ENCODE measurements at regions of chr20 and their contacts with region 1.

Region 1: GRCh38 chr20:49982346-49983122 is at the start of gene SNAI1:
- DNase-seq: peak; percentile 96 to 97
- H3K4me3 ChIP-seq: peak within 1 kb of the TSS; percentile 69
- H3K4me3 Mint-ChIP-seq: peak within 1 kb of the TSS; percentile 73
- H3K27ac Mint-ChIP-seq: peak within 1 kb of the TSS; percentile 73
- H3K4me1 ChIP-seq: peaks cover 43% of the 10 kb centered on the region
- H3K4me1 Mint-ChIP-seq: peaks cover 34% of the 10 kb centered on the region
- H3K27me3 ChIP-seq: no peaks in the 10 kb centered on the region
- H3K27me3 Mint-ChIP-seq: no peaks in the 10 kb centered on the region
- CTCF ChIP-seq: peak; percentile 71 to 98
- total RNA-seq, gene SNAI1: 8.9 and 10.9 TPM in 2 replicates

Region 2: DNA sequence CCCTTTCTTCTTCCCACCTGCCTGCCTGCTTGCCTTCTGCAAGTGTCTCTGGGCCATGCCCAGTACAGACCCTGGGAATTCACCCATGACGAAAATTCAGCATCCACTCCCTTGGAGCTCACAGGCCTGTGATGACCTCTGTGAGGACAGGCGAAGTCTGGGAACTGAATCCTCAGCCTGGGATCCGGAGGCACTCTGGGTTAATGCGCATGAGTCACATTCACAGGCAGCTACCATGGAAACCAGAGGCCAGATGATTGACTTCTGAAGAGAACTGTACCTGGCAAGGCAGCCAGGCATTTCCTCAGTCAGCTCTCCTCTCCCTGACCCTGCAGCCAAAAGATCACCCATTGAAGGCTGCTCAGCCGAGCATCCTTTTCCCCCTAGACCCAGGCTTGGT is 128.9 kb before region 1 on chr20:
- CTCF ChIA-PET with region 1: no interaction called
- POLR2A ChIA-PET with region 1: no interaction called
- intact Hi-C with region 1: no loop called
- DNase-seq: peak in 1 of 2 experiments; percentile 49
- H3K4me3 ChIP-seq: no peak overlapping the region
- H3K4me3 Mint-ChIP-seq: no peak overlapping the region
- H3K27ac Mint-ChIP-seq: no peak overlapping the region
- H3K4me1 ChIP-seq: no peaks in the 10 kb centered on the region
- H3K4me1 Mint-ChIP-seq: no peaks in the 10 kb centered on the region
- H3K27me3 ChIP-seq: no peaks in the 10 kb centered on the region
- H3K27me3 Mint-ChIP-seq: no peaks in the 10 kb centered on the region
- CTCF ChIP-seq: no peak

Region 3: DNA sequence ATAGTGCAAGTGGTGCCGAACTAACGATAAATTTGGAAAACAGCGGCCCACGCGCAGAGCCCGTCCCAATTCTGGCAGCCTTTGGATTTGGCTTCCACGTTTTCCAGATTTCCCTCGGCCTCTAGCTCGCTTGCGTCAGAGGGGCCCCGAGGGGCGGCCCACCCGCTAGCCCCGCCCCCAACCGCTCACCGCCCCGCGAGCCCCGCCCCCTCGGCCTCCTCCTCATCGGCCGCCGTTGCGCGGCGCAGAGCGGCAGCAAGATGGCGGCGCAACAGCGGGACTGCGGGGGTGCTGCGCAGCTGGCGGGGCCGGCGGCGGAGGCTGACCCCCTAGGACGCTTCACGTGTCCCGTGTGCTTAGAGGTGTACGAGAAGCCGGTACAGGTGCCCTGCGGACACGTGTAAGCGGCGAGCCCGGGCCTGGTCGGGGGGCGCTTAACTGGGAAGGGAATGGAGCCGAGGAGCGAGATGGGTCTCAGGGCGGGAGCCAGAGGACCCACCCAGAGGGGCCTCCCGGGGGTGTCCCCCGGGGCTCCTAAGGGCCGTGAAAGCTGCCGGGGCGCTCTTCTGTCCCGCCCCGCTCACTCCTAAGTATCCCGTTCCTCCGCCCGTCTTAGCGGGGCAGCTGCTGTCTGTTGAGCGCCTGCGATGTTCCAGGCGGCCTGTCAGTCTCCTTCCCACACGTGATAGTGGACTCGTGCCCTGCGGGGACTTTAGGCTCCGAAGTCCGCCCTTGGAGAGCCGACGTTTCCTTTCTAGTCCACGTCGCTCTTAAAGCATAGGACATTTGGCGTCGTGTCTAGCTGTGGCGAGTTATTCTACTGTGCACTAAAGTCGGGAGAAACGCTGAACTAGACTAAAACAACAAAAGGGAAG is 46.1 kb before region 1 on chr20 and contains the start of gene RNF114:
- CTCF ChIA-PET with region 1: interaction called, 13 read pairs
- POLR2A ChIA-PET with region 1: interaction called, 6 read pairs
- intact Hi-C with region 1: loop called (anchors 2 kb)
- DNase-seq: peak; percentile 94 to 98
- H3K4me3 ChIP-seq: peak within 1 kb of the TSS; percentile 87
- H3K4me3 Mint-ChIP-seq: peak within 1 kb of the TSS; percentile 93
- H3K27ac Mint-ChIP-seq: peak within 1 kb of the TSS; percentile 91
- H3K4me1 ChIP-seq: peaks cover 32% of the 10 kb centered on the region
- H3K4me1 Mint-ChIP-seq: peaks cover 38% of the 10 kb centered on the region
- H3K27me3 ChIP-seq: no peaks in the 10 kb centered on the region
- H3K27me3 Mint-ChIP-seq: no peaks in the 10 kb centered on the region
- CTCF ChIP-seq: peak in 1 of 2 experiments; percentile 11
- total RNA-seq, gene RNF114: 146 and 154 TPM in 2 replicates

Region 4: GRCh38 chr20:50038574-50039012 is 56.1 kb after region 1 on chr20:
- CTCF ChIA-PET with region 1: interaction called, 20 read pairs
- POLR2A ChIA-PET with region 1: interaction called, 4 read pairs
- intact Hi-C with region 1: loop called (anchors 2 kb)
- DNase-seq: peak; percentile 85 to 90
- H3K4me3 ChIP-seq: no peak overlapping the region
- H3K4me3 Mint-ChIP-seq: no peak overlapping the region
- H3K27ac Mint-ChIP-seq: peak overlapping the region; percentile 51
- H3K4me1 ChIP-seq: peaks cover 52% of the 10 kb centered on the region
- H3K4me1 Mint-ChIP-seq: peaks cover 37% of the 10 kb centered on the region
- H3K27me3 ChIP-seq: no peaks in the 10 kb centered on the region
- H3K27me3 Mint-ChIP-seq: no peaks in the 10 kb centered on the region
- CTCF ChIP-seq: no peak

Region 5: DNA sequence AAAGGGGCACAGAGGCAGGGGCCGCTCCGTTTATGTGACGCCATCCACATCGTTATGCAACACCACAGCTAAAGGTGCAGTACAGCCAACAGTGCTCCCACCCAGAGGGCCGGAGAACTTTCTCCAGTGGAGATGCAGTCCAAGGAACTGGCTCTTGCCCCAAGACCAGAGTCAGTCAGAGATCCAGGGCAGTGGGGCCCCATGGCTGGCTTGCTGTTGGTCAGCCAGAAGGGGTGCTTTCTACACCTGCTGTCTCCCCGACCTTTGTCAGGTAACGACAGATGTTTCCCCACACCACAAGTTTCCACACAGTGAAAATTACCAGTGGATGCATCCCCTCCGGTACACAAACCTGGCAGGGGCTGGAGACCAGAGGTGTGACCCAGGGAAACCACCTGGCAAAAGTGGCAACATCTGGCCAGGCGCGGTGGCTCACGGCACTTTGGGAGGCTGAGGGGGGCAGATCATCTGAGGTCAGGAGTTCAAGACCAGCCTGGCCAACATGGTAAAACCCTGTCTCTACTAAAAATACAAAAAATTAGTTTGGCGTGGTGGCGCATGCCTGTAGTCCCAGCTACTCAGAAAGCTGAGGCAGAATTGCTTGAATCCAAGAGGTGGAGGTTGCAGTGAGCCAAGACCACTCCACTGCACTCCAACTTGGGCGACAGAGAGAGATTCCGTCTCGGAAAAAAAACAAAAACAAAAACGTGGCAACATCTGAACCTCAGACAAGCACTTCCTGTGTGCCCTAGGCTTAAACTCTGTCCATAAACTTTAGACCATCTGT is 95.5 kb after region 1 on chr20:
- CTCF ChIA-PET with region 1: interaction called, 433 read pairs
- POLR2A ChIA-PET with region 1: no interaction called
- intact Hi-C with region 1: no loop called
- DNase-seq: peak in 1 of 2 experiments; percentile 45
- H3K4me3 ChIP-seq: no peak overlapping the region
- H3K4me3 Mint-ChIP-seq: no peak overlapping the region
- H3K27ac Mint-ChIP-seq: no peak overlapping the region
- H3K4me1 ChIP-seq: peaks cover 19% of the 10 kb centered on the region
- H3K4me1 Mint-ChIP-seq: peaks cover 17% of the 10 kb centered on the region
- H3K27me3 ChIP-seq: no peaks in the 10 kb centered on the region
- H3K27me3 Mint-ChIP-seq: no peaks in the 10 kb centered on the region
- CTCF ChIP-seq: no peak

Region 6: DNA sequence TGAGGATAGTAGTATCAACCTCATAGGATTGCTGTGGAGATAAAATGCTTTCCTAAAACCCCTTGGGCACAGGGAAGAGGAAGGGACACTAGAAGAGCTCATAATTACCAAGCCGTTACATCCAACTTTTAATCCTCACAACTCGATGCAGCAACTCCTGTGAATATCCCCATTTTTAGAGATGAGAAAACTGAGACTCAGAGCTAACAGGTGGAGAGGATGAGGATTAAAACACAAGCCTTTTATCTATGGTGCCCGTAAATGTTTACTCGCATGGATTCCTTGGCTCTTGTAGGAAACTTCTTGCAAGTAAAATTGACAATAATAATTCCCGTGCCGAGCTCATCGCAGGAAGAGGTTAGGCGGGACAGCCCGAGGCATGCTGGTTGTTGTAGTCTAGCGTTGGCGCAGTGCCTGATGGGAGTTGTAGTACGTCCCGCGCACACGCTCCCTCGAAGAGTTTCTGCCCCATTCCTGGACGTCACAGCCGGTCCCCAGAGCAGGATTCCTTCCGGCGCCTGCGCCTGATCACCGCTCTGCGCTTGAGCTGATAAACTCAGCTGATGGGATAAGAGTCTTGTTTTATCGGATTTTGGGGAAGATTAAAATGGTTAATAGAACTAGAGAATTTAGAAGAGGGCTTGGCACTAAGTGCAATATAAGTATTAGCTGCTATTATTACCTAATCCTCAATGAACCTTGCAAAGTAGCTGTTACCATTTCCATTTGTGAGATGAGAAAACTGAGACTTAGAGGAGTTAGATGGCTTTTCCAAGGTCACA is 133.2 kb after region 1 on chr20:
- CTCF ChIA-PET with region 1: interaction called, 24 read pairs
- POLR2A ChIA-PET with region 1: no interaction called
- intact Hi-C with region 1: no loop called
- DNase-seq: peak; percentile 98
- H3K4me3 ChIP-seq: peak overlapping the region; percentile 43
- H3K4me3 Mint-ChIP-seq: peak overlapping the region; percentile 96
- H3K27ac Mint-ChIP-seq: peak overlapping the region; percentile 85
- H3K4me1 ChIP-seq: peaks cover 30% of the 10 kb centered on the region
- H3K4me1 Mint-ChIP-seq: peaks cover 44% of the 10 kb centered on the region
- H3K27me3 ChIP-seq: no peaks in the 10 kb centered on the region
- H3K27me3 Mint-ChIP-seq: no peaks in the 10 kb centered on the region
- CTCF ChIP-seq: no peak

Region 7: DNA sequence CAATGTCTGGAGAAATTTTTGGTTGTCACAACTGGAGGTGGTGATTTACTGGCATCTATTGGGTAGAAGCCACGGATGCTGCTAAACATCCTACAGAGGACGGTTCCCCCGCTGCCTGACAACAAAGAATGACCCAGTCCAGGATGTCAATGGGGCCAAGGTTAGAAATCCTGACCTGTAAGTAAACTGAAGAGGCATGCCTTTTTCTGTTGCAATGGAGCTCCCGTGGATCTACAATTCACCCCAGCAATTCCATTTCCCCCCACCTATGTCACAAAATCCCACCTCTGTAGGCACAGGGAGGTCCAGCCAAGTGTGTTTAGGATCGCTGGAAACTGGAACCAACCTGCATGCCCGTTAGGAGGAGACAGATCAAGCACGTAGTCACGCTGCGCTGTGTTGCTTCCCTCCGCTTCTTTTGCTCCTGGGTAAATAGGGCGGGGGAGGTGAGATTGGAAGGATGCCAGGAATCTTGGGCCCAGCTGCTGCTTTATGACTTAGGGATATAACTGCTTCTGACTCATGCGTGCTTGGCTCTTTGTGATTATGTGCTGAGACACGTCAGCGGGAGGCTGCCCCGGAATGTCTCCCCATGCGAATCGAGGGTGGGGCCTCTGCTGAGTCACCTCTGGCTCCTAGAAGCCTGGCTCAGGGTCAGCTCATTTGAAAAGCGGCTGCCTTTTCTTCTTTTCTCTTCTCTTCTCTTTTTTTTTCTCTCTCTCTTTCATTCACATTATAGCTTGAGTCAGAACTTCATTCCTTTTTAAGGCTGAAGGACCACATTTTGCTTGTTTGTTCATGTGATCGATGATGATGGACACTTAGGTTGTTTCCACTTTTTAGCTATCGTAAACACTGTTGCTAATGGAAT is 183.4 kb after region 1 on chr20:
- CTCF ChIA-PET with region 1: interaction called, 17 read pairs
- POLR2A ChIA-PET with region 1: no interaction called
- intact Hi-C with region 1: loop called (anchors 1 kb)
- DNase-seq: peak; percentile 100
- H3K4me3 ChIP-seq: peak overlapping the region; percentile 36
- H3K4me3 Mint-ChIP-seq: peak overlapping the region; percentile 78
- H3K27ac Mint-ChIP-seq: peak overlapping the region; percentile 94
- H3K4me1 ChIP-seq: peaks cover 46% of the 10 kb centered on the region
- H3K4me1 Mint-ChIP-seq: peaks cover 25% of the 10 kb centered on the region
- H3K27me3 ChIP-seq: no peaks in the 10 kb centered on the region
- H3K27me3 Mint-ChIP-seq: no peaks in the 10 kb centered on the region
- CTCF ChIP-seq: peak in 1 of 2 experiments; percentile 23

Region 8: DNA sequence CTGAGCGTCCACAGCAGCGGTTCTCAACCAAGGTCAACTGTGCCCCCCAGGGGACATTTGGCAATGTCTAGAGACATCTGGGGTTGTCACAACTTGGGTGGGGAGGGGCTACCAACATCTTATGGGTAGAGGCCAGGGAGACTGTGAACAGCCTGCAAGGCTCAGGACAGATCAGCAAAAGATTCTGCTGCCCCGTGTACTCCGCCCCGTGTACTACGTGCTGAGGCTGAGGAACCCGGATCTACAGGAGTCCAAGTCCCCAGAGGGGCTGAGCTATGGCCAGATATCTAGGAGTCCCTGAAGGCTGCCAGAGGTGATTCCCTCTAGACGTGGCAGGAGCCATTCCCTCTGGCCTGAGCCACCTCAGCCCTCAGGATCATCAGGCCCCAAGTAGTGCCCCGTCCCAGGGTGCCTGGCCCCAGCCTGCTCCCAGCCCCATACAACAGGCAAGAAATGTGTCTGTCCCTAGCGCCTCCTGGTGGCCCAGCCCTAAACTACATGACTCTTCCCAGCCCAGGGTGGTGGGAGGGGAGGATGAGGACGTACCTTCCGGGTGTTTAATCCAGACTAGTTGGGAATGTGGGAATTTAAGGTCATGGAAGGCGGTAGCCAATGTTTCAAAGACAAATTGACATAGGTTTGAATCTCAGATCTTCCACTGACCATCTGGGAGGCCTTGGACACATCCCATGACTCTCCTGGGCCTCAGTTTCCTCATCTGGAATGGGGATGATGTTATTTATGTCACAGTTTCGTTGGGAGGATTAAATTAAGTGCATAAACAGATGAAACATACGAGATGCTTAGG is 478.1 kb after region 1 on chr20:
- CTCF ChIA-PET with region 1: interaction called, 4 read pairs
- POLR2A ChIA-PET with region 1: no interaction called
- intact Hi-C with region 1: loop called (anchors 5 kb)
- DNase-seq: peak; percentile 93 to 96
- H3K4me3 ChIP-seq: no peak overlapping the region
- H3K4me3 Mint-ChIP-seq: no peak overlapping the region
- H3K27ac Mint-ChIP-seq: peak overlapping the region; percentile 34
- H3K4me1 ChIP-seq: peaks cover 33% of the 10 kb centered on the region
- H3K4me1 Mint-ChIP-seq: peaks cover 31% of the 10 kb centered on the region
- H3K27me3 ChIP-seq: no peaks in the 10 kb centered on the region
- H3K27me3 Mint-ChIP-seq: no peaks in the 10 kb centered on the region
- CTCF ChIP-seq: peak; percentile 99 to 100

Measured in Caco-2 (cell line).